Naive thymus-derived CD4-positive, alpha-beta T cell (primary cell): ENCODE measurements at regions of chr10 and their contacts with region 1.

Region 1: GRCh38 chr10:86936661-86937501 is 20.5 kb downstream of the MMRN2 start:
- DNase-seq: peak in 1 of 9 donors; percentile 5
- ATAC-seq: no peak
- H3K4me3 ChIP-seq: no peak overlapping the region
- H3K4me3 Mint-ChIP-seq: no peak overlapping the region
- H3K27ac ChIP-seq: no peak overlapping the region
- H3K27ac Mint-ChIP-seq: no peak overlapping the region
- H3K4me1 ChIP-seq: no peaks in the 10 kb centered on the region
- H3K4me1 Mint-ChIP-seq: peaks cover 0 to 7% (median 0%) of the 10 kb centered on the region in 7 donors
- H3K27me3 ChIP-seq: no peaks in the 10 kb centered on the region
- H3K27me3 Mint-ChIP-seq: peaks cover 0 to 3% (median 0%) of the 10 kb centered on the region in 5 donors

Region 2: DNA sequence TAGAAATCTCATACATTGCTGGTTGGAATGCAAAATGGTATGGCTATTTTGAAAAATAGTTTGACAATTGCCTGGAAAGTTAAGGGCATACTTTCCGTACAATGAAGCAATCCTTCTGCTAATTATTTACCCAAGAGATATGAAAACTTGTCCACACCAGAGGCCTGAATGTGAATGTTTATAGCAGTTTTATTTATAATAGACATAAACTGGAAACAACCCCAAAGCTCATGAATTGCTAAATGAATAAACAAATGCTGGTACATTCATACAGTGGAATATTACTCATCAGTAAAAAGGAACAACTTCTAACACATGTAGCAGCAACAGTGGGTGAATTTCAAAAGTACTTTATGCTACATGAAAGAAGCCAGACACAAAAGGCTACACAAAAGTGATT is 22.1 kb before region 1 on chr10:
- CTCF ChIA-PET with region 1: no interaction called
- POLR2A ChIA-PET with region 1: no interaction called
- intact Hi-C with region 1: no loop called
- DNase-seq: no peak
- ATAC-seq: no peak
- H3K4me3 ChIP-seq: no peak overlapping the region
- H3K4me3 Mint-ChIP-seq: no peak overlapping the region
- H3K27ac ChIP-seq: no peak overlapping the region
- H3K27ac Mint-ChIP-seq: no peak overlapping the region
- H3K4me1 ChIP-seq: no peaks in the 10 kb centered on the region
- H3K4me1 Mint-ChIP-seq: no peaks in the 10 kb centered on the region
- H3K27me3 ChIP-seq: no peaks in the 10 kb centered on the region
- H3K27me3 Mint-ChIP-seq: no peaks in the 10 kb centered on the region

Region 3: DNA sequence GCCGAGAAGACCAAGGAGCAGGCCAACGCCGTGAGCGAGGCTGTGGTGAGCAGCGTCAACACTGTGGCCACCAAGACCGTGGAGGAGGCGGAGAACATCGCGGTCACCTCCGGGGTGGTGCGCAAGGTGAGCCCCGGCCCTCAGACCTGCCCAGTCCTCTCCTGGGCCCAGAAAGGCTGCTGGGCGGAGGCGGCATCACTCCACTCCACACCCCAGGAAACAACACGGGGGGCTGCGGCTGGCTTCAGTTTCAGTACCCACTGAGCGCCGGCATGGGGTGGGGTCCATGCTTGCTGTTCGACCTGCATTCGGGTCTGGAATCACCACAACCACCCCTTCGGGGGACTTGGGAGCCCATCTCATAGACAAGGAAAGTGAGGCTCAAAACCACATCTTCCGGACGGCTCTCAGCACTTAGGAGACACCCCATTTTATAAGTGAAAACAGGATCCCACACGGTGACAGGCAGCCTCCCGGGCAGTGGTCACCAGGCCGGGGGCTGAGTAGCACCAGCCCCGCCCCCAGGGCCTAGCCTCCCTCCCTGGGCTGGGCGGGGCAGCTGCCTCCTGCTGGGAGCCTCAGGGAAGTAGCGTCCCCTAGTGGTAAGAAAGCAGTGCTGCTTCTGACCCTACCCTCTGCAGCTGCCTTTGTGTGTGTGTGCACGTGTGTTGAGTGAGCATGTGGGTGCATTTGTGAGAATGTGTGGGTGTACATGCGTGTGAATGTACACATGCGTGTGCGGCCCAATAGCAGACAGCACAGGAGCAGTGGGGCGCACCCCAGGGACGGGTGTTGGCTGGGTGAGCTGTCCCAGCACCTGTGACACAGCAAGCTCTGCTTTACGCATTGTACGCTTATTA is 23.4 kb after region 1 on chr10:
- CTCF ChIA-PET with region 1: interaction called, 90 read pairs
- POLR2A ChIA-PET with region 1: no interaction called
- intact Hi-C with region 1: loop called (anchors 1 kb)
- DNase-seq: peak in 6 of 9 donors; percentile 9 to 50 (median 38)
- ATAC-seq: peak; percentile 79
- H3K4me3 ChIP-seq: no peak overlapping the region
- H3K4me3 Mint-ChIP-seq: no peak overlapping the region
- H3K27ac ChIP-seq: no peak overlapping the region
- H3K27ac Mint-ChIP-seq: peak overlapping the region in 1 of 9 donors; percentile 44
- H3K4me1 ChIP-seq: peaks cover 0 to 5% of the 10 kb centered on the region in 2 donors
- H3K4me1 Mint-ChIP-seq: peaks cover 0 to 6% (median 4%) of the 10 kb centered on the region in 7 donors
- H3K27me3 ChIP-seq: no peaks in the 10 kb centered on the region
- H3K27me3 Mint-ChIP-seq: no peaks in the 10 kb centered on the region

Region 4: GRCh38 chr10:86965986-86966654 is 29.2 kb after region 1 on chr10:
- CTCF ChIA-PET with region 1: interaction called, 90 read pairs
- POLR2A ChIA-PET with region 1: interaction called, 13 read pairs
- intact Hi-C with region 1: loop called (anchors 1 kb)
- DNase-seq: no peak
- ATAC-seq: peak; percentile 1
- H3K4me3 ChIP-seq: peak overlapping the region; percentile 38
- H3K4me3 Mint-ChIP-seq: peak overlapping the region; percentile 55 to 87 (median 80)
- H3K27ac ChIP-seq: peak overlapping the region; percentile 61
- H3K27ac Mint-ChIP-seq: peak overlapping the region; percentile 54 to 90 (median 67)
- H3K4me1 ChIP-seq: peaks cover 4 to 45% of the 10 kb centered on the region in 2 donors
- H3K4me1 Mint-ChIP-seq: peaks cover 10 to 47% (median 43%) of the 10 kb centered on the region in 7 donors
- H3K27me3 ChIP-seq: no peaks in the 10 kb centered on the region
- H3K27me3 Mint-ChIP-seq: peaks cover 0 to 22% (median 0%) of the 10 kb centered on the region in 5 donors

Region 5: GRCh38 chr10:86971232-86971991 is 34.5 kb after region 1 on chr10:
- CTCF ChIA-PET with region 1: interaction called, 90 read pairs
- POLR2A ChIA-PET with region 1: interaction called, 13 read pairs
- intact Hi-C with region 1: loop called (anchors 1 kb)
- DNase-seq: peak; percentile 85 to 95 (median 90)
- ATAC-seq: peak; percentile 93
- H3K4me3 ChIP-seq: peak overlapping the region; percentile 78
- H3K4me3 Mint-ChIP-seq: peak overlapping the region; percentile 76 to 89 (median 84)
- H3K27ac ChIP-seq: peak overlapping the region; percentile 91
- H3K27ac Mint-ChIP-seq: peak overlapping the region; percentile 78 to 96 (median 92)
- H3K4me1 ChIP-seq: peaks cover 12 to 36% of the 10 kb centered on the region in 2 donors
- H3K4me1 Mint-ChIP-seq: peaks cover 19 to 47% (median 45%) of the 10 kb centered on the region in 7 donors
- H3K27me3 ChIP-seq: no peaks in the 10 kb centered on the region
- H3K27me3 Mint-ChIP-seq: peaks cover 0 to 49% (median 0%) of the 10 kb centered on the region in 5 donors

Region 6: DNA sequence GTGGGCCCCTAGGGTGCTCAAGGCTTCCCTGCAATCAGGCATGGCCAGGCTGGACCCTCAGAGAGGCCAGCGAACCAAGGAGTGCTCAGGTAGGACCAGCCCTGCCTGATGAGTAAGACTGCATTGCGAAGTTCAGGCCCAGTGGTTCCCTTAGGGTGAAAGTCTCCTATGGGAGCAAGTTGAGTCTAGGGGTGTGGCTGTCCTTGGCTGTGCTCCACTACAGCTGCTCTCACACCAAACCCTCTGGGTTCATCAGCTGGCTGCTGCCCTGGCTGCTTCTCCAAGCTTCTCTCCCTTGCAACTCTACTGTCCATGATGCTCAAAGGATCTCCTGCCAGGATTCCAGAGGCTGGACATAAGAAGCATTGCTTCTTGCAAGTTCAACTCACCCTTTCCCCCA is 101.9 kb after region 1 on chr10:
- CTCF ChIA-PET with region 1: interaction called, 3 read pairs
- POLR2A ChIA-PET with region 1: no interaction called
- intact Hi-C with region 1: loop called in 1 of 2 experiments (anchors 5 kb)
- DNase-seq: no peak
- ATAC-seq: no peak
- H3K4me3 ChIP-seq: no peak overlapping the region
- H3K4me3 Mint-ChIP-seq: no peak overlapping the region
- H3K27ac ChIP-seq: no peak overlapping the region
- H3K27ac Mint-ChIP-seq: no peak overlapping the region
- H3K4me1 ChIP-seq: no peaks in the 10 kb centered on the region
- H3K4me1 Mint-ChIP-seq: no peaks in the 10 kb centered on the region
- H3K27me3 ChIP-seq: no peaks in the 10 kb centered on the region
- H3K27me3 Mint-ChIP-seq: peaks cover 0 to 13% (median 0%) of the 10 kb centered on the region in 5 donors

Region 7: GRCh38 chr10:87064651-87065050 is 127.8 kb after region 1 on chr10:
- CTCF ChIA-PET with region 1: interaction called, 4 read pairs
- POLR2A ChIA-PET with region 1: no interaction called
- intact Hi-C with region 1: loop called in 1 of 2 experiments (anchors 5 kb)
- DNase-seq: no peak
- ATAC-seq: no peak
- H3K4me3 ChIP-seq: no peak overlapping the region
- H3K4me3 Mint-ChIP-seq: no peak overlapping the region
- H3K27ac ChIP-seq: no peak overlapping the region
- H3K27ac Mint-ChIP-seq: no peak overlapping the region
- H3K4me1 ChIP-seq: no peaks in the 10 kb centered on the region
- H3K4me1 Mint-ChIP-seq: peaks cover 0 to 4% (median 0%) of the 10 kb centered on the region in 7 donors
- H3K27me3 ChIP-seq: no peaks in the 10 kb centered on the region
- H3K27me3 Mint-ChIP-seq: no peaks in the 10 kb centered on the region

Region 8: GRCh38 chr10:87094373-87095235 is 157.7 kb after region 1 on chr10 and contains the starts of genes GLUD1 and SHLD2:
- CTCF ChIA-PET with region 1: interaction called, 3 read pairs
- POLR2A ChIA-PET with region 1: no interaction called
- intact Hi-C with region 1: loop called (anchors 1 kb)
- DNase-seq: peak; percentile 78 to 94 (median 84)
- ATAC-seq: peak; percentile 81
- H3K4me3 ChIP-seq: peak within 1 kb of the TSS; percentile 74
- H3K4me3 Mint-ChIP-seq: peak within 1 kb of the TSS; percentile 89 to 97 (median 94)
- H3K27ac ChIP-seq: peak within 1 kb of the TSS; percentile 88
- H3K27ac Mint-ChIP-seq: peak within 1 kb of the TSS; percentile 89 to 97 (median 94)
- H3K4me1 ChIP-seq: peaks cover 12 to 27% of the 10 kb centered on the region in 2 donors
- H3K4me1 Mint-ChIP-seq: peaks cover 38 to 65% (median 52%) of the 10 kb centered on the region in 7 donors
- H3K27me3 ChIP-seq: no peaks in the 10 kb centered on the region
- H3K27me3 Mint-ChIP-seq: no peaks in the 10 kb centered on the region
- total RNA-seq, gene GLUD1: 70.2 to 98.1 (median 73.2) TPM
- total RNA-seq, gene SHLD2: 19.3 to 31.4 (median 21.1) TPM